Lower lobe of right lung (tissue), 2 donors: ENCODE measurements at regions of chr16 and their contacts with region 1.

Region 1: GRCh38 chr16:82344157-82344556 is 174.1 kb upstream of the MPHOSPH6 start:
- DNase-seq: no peak
- ATAC-seq: peak in 1 of 2 donors; percentile 50
- H3K4me3 ChIP-seq: no peak overlapping the region
- H3K27ac ChIP-seq: no peak overlapping the region
- H3K4me1 ChIP-seq: no peaks in the 10 kb centered on the region
- H3K27me3 ChIP-seq: no peaks in the 10 kb centered on the region
- CTCF ChIP-seq: peak; percentile 33

Region 2: DNA sequence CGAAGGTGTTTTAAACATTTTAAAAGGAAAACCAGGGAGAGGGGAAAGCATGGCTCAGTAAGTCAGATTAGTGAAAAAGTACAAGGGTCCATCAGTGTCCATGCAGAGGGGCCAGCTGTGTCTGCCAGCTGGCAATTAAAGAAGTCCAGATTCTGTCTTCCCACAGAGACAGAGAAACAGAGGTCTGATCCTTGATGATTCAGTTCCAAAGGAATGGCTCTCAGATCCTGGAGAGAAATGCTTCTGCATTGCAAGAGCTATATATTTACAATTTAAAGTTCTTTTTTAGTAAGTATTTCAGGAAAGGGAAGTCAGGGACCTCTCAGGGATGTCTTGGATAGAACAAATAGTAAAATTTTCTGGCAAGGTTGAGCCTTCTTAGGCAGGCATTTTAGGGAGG is 252.9 kb before region 1 on chr16:
- intact Hi-C with region 1: no loop called
- DNase-seq: no peak
- ATAC-seq: no peak
- H3K4me3 ChIP-seq: no peak overlapping the region
- H3K27ac ChIP-seq: no peak overlapping the region
- H3K4me1 ChIP-seq: no peaks in the 10 kb centered on the region
- H3K27me3 ChIP-seq: no peaks in the 10 kb centered on the region
- CTCF ChIP-seq: no peak

Region 3: DNA sequence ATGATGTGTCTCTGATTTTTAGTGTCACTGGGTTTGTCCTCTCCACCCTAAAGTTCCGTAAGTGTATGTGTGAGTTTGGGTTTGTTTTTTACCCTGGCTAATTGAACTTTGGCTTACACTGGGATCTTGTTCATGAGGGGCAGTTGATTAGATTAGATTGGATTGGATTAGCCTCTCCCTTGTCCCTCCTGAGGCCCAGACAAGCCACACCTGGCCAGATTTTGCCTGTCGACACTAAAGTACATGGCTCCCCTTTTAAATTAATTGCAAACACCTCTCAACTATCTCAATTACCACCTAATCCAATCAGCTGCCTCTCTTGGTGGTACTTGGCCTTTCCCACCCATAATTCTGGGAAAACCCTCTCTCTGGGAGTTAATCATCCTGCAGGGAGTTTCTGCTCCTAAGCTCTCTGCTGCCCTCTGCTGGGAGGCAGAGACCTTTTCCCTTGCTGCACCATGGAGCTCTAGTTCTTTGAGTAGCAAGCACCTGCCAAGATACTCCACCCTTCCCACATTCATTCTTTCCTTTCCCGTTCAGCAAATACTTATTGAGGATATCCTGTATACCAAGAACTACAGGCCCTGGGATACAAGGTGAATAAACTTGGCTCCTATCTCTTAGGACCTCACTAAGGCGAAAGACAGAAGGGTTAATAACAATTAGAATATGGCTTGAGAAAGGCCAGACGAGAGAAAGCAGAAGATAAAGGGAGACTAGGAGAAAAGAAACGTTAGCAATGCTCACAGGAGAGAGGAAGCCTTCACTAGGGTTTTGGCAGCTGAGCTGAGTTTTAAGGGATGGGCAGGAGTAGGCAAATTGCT is 114.1 kb before region 1 on chr16:
- intact Hi-C with region 1: no loop called
- DNase-seq: peak; percentile 76
- ATAC-seq: peak; percentile 80 to 86
- H3K4me3 ChIP-seq: no peak overlapping the region
- H3K27ac ChIP-seq: no peak overlapping the region
- H3K4me1 ChIP-seq: peaks cover 4% of the 10 kb centered on the region
- H3K27me3 ChIP-seq: no peaks in the 10 kb centered on the region
- CTCF ChIP-seq: peak; percentile 94

Region 4: GRCh38 chr16:82271636-82272035 is 72.5 kb before region 1 on chr16:
- intact Hi-C with region 1: loop called (anchors 10 kb)
- DNase-seq: no peak
- ATAC-seq: no peak
- H3K4me3 ChIP-seq: no peak overlapping the region
- H3K27ac ChIP-seq: no peak overlapping the region
- H3K4me1 ChIP-seq: no peaks in the 10 kb centered on the region
- H3K27me3 ChIP-seq: no peaks in the 10 kb centered on the region
- CTCF ChIP-seq: no peak